HEK293 (cell line): ENCODE measurements at regions of chr7 and their contacts with region 1.

Region 1: DNA sequence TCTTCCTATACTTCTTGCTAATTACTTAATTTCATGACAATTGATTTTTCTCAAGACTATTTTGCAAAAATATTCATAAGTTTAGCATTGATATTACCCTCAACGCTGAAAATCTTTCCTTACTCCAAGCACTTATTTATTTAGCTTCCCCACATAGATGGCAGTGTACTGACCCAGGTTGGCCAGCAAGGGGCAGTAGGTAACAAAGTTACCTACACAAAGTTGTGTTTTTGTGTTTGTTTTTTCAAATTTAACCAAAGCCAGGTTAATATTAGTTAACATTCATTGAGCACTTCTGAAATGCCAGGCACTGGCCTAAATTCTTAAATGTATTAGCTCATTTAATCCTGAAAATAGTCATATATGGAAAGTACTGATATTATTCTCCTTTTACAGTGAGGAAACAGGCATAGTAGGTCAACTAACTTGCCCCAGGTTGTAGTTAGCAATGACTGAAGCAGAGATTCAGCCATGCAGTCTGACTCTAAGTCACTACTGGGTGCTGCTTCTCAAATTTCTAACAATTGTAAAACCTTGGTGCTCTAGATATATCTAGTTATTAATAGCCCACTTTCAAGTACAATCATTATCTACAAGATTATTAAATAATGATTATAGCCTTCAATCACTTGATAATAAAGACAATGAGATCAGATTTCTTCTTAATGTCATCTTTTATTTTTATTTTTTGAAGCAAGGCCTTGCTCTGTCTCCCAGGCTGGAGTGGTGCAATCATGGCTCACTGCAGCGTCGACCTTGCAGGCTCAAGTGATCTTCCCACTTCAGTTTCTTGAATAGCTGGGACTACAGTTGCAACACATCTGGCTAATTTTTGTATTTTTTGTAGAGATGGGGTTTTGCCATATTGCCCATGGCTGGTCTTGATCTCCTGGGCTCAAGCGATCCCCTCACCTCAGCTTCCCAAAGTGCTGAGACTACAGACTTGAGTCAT is 5.8 kb upstream of the GGCT start:
- H3K4me3 ChIP-seq: no peak overlapping the region
- H3K27ac ChIP-seq: no peak overlapping the region
- H3K4me1 ChIP-seq: peaks cover 4% of the 10 kb centered on the region; the same call in 1 of the 2 replicates
- CTCF ChIP-seq: no peak

Region 2: DNA sequence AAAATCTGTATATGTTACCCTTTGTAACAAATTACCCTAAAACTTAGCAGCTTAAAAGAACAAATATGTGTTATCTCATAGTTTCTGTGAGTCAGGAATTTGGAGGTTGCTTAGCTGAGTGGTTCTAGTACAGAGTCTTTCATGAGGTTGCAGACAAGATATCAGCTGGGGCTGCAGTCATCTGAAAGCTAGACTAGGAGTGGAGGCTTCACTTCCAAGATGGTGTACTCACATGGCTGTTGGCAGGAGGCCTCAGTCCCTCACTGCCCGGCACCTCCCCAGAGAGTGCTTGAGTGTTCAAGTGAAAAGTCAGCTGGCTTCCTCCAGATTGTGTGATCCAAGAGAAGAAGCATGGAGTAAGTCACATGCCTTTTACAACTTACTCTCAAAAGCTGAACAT is 11.1 kb after region 1 on chr7:
- CTCF ChIA-PET with region 1: interaction called, 14 read pairs
- POLR2A ChIA-PET with region 1: no interaction called
- H3K4me3 ChIP-seq: no peak overlapping the region
- H3K27ac ChIP-seq: no peak overlapping the region
- H3K4me1 ChIP-seq: no peaks in the 10 kb centered on the region
- CTCF ChIP-seq: no peak